ENCODE measurements at regions of chr14 and their contacts with region 1.

Region 1: GRCh38 chr14:72476657-72477499 is 417.0 kb downstream of the DPF3 start:
- DNase-seq: peak; percentile 95
- ATAC-seq: peak; percentile 91
- H3K4me3 Mint-ChIP-seq: peak overlapping the region; percentile 56
- H3K27ac Mint-ChIP-seq: peak overlapping the region; percentile 92
- H3K4me1 Mint-ChIP-seq: peaks cover 93% of the 10 kb centered on the region
- H3K27me3 Mint-ChIP-seq: no peaks in the 10 kb centered on the region

Region 2: GRCh38 chr14:72443991-72444441 is 32.9 kb before region 1 on chr14:
- CTCF ChIA-PET with region 1: interaction called, 98 read pairs
- POLR2A ChIA-PET with region 1: interaction called, 34 read pairs
- DNase-seq: peak; percentile 82
- ATAC-seq: peak; percentile 34
- H3K4me3 Mint-ChIP-seq: peak overlapping the region; percentile 54
- H3K27ac Mint-ChIP-seq: peak overlapping the region; percentile 85
- H3K4me1 Mint-ChIP-seq: peaks cover 87% of the 10 kb centered on the region
- H3K27me3 Mint-ChIP-seq: no peaks in the 10 kb centered on the region

Region 3: DNA sequence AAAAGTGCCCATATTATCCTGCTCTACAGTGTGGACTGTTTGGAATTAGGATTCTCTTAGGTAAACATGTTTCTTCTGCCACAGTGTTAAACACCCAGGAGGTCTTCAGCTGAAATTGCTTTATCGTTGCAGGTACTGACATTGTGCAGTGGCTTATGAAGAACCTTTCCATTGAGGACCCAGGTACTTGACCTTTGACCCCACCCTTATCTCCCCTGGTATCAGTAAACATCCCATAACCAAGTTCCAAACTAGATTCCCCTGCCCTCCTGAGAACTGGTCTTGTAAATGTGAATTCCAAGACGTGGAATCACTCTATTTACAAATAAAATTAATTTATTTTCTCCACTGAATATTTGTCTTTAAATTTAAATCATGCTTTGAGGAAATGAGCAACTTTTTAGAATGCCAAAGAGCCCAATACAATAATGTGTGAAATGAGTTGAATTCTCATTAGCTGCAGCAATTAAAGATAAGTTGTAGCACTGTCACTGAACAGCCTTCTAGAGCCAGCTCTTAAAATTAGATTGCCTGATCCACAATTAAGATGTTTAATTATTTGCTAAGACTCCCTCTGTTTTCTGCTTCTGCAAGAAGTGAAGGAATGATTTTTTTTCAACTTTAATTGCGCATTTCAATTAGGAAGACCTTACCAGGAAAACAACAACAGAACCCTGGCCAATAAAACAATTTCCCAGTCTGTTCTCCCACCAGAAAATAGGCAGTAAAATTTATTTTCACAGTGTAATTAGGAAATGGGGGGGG is 22.3 kb before region 1 on chr14:
- CTCF ChIA-PET with region 1: interaction called, 18 read pairs
- POLR2A ChIA-PET with region 1: interaction called, 3 read pairs
- DNase-seq: no peak
- ATAC-seq: no peak
- H3K4me3 Mint-ChIP-seq: no peak overlapping the region
- H3K27ac Mint-ChIP-seq: no peak overlapping the region
- H3K4me1 Mint-ChIP-seq: peaks cover 59% of the 10 kb centered on the region
- H3K27me3 Mint-ChIP-seq: peaks cover 18% of the 10 kb centered on the region

Measured in activated CD8-positive, alpha-beta T cell treated with anti-CD3 and anti-CD28 coated beads, Interleukin-2, amount 10 ng/mL, durations not matched to agents 7 days and 5 days (primary cell).